Activated CD8-positive, alpha-beta T cell treated with anti-CD3 and anti-CD28 coated beads for 36 hours (primary cell): ENCODE measurements at regions of chr2 and their contacts with region 1.

Region 1: GRCh38 chr2:30862054-30862651 is 54.9 kb upstream of the CAPN13 start:
- DNase-seq: peak; percentile 71
- ATAC-seq: peak; percentile 47
- H3K4me3 Mint-ChIP-seq: no peak overlapping the region
- H3K27ac Mint-ChIP-seq: no peak overlapping the region
- H3K4me1 Mint-ChIP-seq: no peaks in the 10 kb centered on the region
- H3K27me3 Mint-ChIP-seq: peaks cover 3% of the 10 kb centered on the region
- CTCF ChIP-seq: peak; percentile 92

Region 2: DNA sequence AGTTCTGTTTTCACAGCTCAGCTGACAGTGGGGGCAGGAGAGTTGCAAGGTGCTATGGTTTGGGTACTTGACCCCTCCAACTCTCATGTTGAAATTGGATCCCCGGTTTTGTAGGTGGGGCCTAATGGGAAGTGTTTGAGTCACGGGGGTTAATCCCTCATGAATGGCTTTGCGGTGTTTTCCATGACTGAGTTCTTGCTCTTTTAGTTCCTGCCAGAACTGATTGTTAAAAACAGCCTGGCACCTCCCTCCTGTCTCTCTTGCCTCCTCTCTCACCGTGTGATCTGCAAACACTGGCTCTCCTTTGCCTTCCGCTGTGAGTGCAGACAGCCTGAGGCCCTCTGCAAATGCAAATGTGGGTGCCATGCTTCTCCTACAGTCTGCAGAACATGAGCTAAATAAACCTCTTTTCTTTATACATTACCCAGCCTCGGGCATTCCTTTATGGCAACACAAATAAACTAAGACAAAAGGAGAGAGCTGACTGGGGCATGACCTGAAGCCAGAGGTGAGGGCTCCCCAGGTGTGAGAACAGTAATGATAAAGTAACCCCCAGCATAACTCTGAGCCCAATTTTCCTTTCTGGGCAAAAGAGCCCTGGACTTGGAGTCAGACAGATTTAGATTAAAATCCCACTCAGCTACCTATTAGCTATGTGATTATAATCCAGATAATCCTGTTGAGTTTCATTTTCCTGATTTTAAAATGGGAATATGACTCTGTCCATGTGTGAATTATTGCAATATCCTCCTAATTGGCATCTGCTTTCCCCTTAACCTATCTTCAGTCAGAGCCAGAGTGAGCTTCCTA is 10.0 kb after region 1 on chr2:
- CTCF ChIA-PET with region 1: interaction called, 11 read pairs
- POLR2A ChIA-PET with region 1: no interaction called
- intact Hi-C with region 1: no loop called
- DNase-seq: no peak
- ATAC-seq: no peak
- H3K4me3 Mint-ChIP-seq: no peak overlapping the region
- H3K27ac Mint-ChIP-seq: no peak overlapping the region
- H3K4me1 Mint-ChIP-seq: no peaks in the 10 kb centered on the region
- H3K27me3 Mint-ChIP-seq: peaks cover 11% of the 10 kb centered on the region
- CTCF ChIP-seq: no peak

Region 3: DNA sequence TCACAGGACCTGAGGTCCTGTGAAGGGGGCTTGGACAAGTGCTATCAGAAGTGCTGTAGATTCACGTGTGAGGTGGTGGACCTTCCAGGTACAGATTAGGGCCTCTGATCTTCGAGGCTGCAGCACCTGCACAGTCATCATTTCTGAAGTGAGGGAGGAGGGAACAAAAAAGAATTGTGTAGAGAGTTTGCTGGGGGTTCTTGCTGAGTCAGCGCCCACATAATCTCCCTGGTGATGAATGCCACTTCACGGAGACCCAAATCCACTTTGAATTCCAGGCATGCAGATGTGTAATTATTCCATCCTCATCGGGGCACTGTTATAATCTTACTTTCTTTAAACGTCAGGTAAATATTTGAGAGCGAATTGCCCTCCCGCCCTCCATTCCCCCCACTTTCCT is 73.6 kb after region 1 on chr2:
- CTCF ChIA-PET with region 1: no interaction called
- POLR2A ChIA-PET with region 1: no interaction called
- intact Hi-C with region 1: no loop called
- DNase-seq: no peak
- ATAC-seq: no peak
- H3K4me3 Mint-ChIP-seq: no peak overlapping the region
- H3K27ac Mint-ChIP-seq: no peak overlapping the region
- H3K4me1 Mint-ChIP-seq: peaks cover 16% of the 10 kb centered on the region
- H3K27me3 Mint-ChIP-seq: no peaks in the 10 kb centered on the region
- CTCF ChIP-seq: no peak